ENCODE measurements at regions of chr20 and their contacts with region 1.

Region 1: GRCh38 chr20:354298-355064 is 7.6 kb downstream of the NRSN2 start:
- DNase-seq: peak; percentile 81 to 93
- H3K4me3 ChIP-seq: no peak overlapping the region
- H3K27ac ChIP-seq: no peak overlapping the region
- H3K4me1 ChIP-seq: peaks cover 0 to 16% (median 5%) of the 10 kb centered on the region in 4 donors
- H3K27me3 ChIP-seq: no peaks in the 10 kb centered on the region
- CTCF ChIP-seq: peak in 5 of 7 experiments; percentile 88 to 96 (median 89)
- EP300 ChIP-seq: no peak
- POLR2A ChIP-seq: no peak

Region 2: GRCh38 chr20:266596-267562 is 87.6 kb before region 1 on chr20:
- intact Hi-C with region 1: no loop called
- DNase-seq: peak; percentile 89 to 95
- H3K4me3 ChIP-seq: peak overlapping the region; percentile 50 to 59 (median 52)
- H3K27ac ChIP-seq: no peak overlapping the region
- H3K4me1 ChIP-seq: peaks cover 4 to 14% (median 10%) of the 10 kb centered on the region in 4 donors
- H3K27me3 ChIP-seq: peaks cover 0 to 13% (median 0%) of the 10 kb centered on the region in 3 donors
- CTCF ChIP-seq: peak in 5 of 7 experiments; percentile 86 to 96 (median 95)
- EP300 ChIP-seq: no peak
- POLR2A ChIP-seq: no peak

Region 3: DNA sequence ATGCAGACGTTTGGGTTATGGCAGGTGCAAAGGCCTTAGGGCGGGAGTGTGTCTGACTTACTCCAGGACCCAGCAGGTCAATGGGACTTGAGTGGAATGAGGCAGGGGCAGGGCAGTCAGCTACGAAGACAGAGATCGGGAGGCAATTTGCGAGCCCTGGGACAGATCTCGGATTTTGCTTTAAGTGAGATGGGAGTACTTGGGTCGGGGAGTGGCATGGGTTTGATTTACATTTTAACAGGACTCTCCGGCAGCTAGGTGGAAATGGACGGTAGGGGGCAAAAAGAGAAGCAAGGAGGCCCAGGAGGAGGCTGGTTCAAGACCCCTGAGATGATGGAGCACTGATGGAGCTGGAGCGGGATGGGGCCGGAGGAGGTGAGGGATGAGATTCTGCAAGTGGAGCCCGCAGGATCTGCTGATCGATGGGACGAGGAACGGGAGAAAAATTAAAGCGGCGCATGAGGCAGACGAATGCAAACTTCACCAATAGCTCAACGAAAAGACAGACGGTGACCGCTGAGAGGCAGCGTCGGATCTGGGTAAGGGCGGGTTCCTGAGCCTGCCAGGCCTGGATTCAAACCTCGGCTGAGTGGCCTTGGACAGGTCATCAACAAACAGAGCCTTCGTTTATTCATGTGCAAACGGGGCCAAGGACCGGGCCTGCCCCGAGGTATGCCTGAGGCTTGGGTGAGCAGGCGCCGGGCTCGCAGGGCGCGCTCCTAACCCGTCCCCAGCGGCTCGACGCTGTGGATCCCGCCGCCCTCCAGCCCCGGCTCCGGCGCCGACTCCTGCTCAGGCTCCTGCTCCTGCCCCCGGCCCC is 52.9 kb after region 1 on chr20:
- intact Hi-C with region 1: loop called (anchors 10 kb)
- DNase-seq: peak; percentile 82 to 90
- H3K4me3 ChIP-seq: peak overlapping the region; percentile 86 to 98 (median 88)
- H3K27ac ChIP-seq: peak overlapping the region; percentile 92 to 97 (median 94)
- H3K4me1 ChIP-seq: peaks cover 19 to 34% (median 23%) of the 10 kb centered on the region in 4 donors
- H3K27me3 ChIP-seq: no peaks in the 10 kb centered on the region
- CTCF ChIP-seq: no peak
- EP300 ChIP-seq: no peak
- POLR2A ChIP-seq: no peak

Region 4: DNA sequence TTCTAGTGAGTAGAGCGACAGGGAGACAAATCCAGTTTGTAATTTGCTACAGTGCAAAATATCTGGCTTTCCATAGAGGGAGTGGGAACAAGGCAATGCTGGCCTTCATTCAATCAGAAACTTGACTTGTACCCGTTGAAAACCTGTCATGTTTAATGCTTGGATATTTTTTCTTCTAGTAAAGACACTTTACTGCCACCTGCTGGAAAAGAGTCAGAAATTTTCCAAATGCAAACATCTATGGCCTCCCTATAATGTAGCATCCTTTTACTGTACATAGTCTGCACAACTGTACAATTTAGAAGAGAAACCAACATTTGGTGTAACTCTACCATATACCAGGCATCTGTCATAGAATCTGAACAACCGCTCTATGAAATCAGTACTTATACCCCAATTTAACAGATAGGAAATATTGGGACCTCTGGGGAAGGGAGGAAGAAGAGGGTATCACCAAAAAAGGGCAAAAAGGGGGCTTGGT is 124.5 kb after region 1 on chr20:
- intact Hi-C with region 1: loop called (anchors 5 kb)
- DNase-seq: peak in 1 of 2 donors; percentile 82
- H3K4me3 ChIP-seq: no peak overlapping the region
- H3K27ac ChIP-seq: no peak overlapping the region
- H3K4me1 ChIP-seq: peaks cover 0 to 11% (median 0%) of the 10 kb centered on the region in 4 donors
- H3K27me3 ChIP-seq: no peaks in the 10 kb centered on the region
- CTCF ChIP-seq: peak in 5 of 7 experiments; percentile 19 to 59 (median 43)
- EP300 ChIP-seq: no peak
- POLR2A ChIP-seq: no peak

Region 5: GRCh38 chr20:595330-596308 is 241.1 kb after region 1 on chr20:
- intact Hi-C with region 1: no loop called
- DNase-seq: peak in 1 of 2 donors; percentile 80
- H3K4me3 ChIP-seq: no peak overlapping the region
- H3K27ac ChIP-seq: no peak overlapping the region
- H3K4me1 ChIP-seq: no peaks in the 10 kb centered on the region
- H3K27me3 ChIP-seq: peaks cover 0 to 43% (median 0%) of the 10 kb centered on the region in 3 donors
- CTCF ChIP-seq: no peak
- EP300 ChIP-seq: no peak
- POLR2A ChIP-seq: no peak

Region 6: DNA sequence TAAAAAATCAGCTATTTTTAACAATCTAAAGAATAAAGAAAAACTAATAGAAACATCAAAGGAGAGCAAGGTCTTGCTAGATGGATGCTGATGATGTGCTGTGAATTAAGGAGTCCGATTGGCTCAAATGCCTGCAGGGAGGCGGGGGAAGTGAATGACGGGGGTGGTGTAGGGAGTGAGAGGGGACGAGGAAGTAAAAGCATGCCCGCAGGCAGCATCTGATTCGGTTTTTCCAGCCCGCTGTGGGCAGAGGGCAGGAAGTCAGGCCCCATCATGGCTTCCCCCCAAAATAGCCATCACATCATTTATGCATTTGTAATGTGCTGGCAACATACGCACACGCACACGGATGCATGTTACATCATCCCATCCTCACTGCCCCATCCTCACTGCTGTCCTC is 637.4 kb after region 1 on chr20:
- intact Hi-C with region 1: no loop called
- DNase-seq: no peak
- H3K4me3 ChIP-seq: no peak overlapping the region
- H3K27ac ChIP-seq: no peak overlapping the region
- H3K4me1 ChIP-seq: no peaks in the 10 kb centered on the region
- H3K27me3 ChIP-seq: peaks cover 0 to 65% (median 18%) of the 10 kb centered on the region in 3 donors
- CTCF ChIP-seq: no peak
- EP300 ChIP-seq: no peak
- POLR2A ChIP-seq: no peak

Measured in stomach (tissue), 19 donors.